Dorsolateral prefrontal cortex (tissue), 120 donors: ENCODE measurements at regions of chr13 and their contacts with region 1.

Region 1: GRCh38 chr13:50081679-50082425 is 66.6 kb downstream of the KCNRG start:
- DNase-seq: peak; percentile 96 to 99 (median 98)
- H3K4me3 ChIP-seq: peak overlapping the region; percentile 61 to 91 (median 79)
- H3K27ac ChIP-seq: peak overlapping the region; percentile 63 to 94 (median 86)
- H3K27me3 ChIP-seq: no peaks in the 10 kb centered on the region
- CTCF ChIP-seq: peak in 35 of 56 donors; percentile 9 to 50 (median 28)

Region 2: GRCh38 chr13:49540552-49540951 is 541.3 kb before region 1 on chr13:
- intact Hi-C with region 1: no loop called
- DNase-seq: no peak
- H3K4me3 ChIP-seq: peak overlapping the region in 1 of 59 donors; percentile 19
- H3K27ac ChIP-seq: peak overlapping the region in 28 of 59 donors; percentile 0 to 63 (median 24)
- H3K27me3 ChIP-seq: no peaks in the 10 kb centered on the region
- CTCF ChIP-seq: no peak

Region 3: DNA sequence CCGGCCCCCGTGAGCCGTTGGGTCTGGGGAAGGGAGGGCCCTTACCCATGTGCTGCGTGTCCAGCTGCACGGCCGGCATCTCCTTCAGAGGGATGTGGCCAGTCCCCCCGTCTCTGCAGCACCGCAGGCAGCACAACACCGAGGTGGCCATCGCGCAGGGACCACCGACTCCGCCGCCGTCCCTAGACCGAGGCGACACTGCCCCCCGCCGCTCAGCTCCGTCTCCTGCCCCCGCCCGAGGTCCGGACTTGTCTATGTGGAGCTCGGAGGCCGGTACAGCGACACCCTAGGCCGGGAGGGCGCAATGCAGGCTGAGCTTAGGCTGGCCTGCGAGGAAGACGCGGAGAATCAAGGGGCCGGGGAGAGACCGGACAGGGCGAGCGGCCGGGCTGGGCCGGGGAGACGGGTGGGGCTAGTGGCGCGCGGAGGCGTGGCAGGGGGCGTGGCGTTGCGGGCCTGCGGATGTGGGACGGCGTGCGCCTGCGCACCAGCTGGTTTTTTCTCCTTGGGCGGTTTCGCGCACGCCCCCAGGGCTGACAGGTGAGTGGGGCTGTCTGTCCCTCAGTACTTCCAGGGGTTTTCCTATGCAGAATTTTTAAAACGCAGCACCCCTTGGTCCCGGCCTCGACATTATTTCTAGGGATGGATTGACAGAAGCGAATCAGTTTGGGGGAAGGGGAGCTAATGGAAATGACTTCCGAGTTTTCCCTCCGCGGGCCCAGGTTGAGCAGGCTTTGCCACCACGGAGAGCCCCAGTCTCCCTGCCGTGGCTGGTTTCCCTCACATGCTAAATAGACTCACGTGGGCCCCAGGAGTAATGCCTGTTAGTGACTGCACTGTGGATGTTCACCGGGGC is 145.5 kb before region 1 on chr13 and contains the start of gene SPRYD7:
- intact Hi-C with region 1: loop called in 1 of 2 experiments (anchors 5 kb)
- DNase-seq: peak; percentile 96 to 99 (median 98)
- H3K4me3 ChIP-seq: peak within 1 kb of the TSS; percentile 56 to 97 (median 86)
- H3K27ac ChIP-seq: peak within 1 kb of the TSS in 58 of 59 donors; percentile 50 to 94 (median 88)
- H3K27me3 ChIP-seq: no peaks in the 10 kb centered on the region
- CTCF ChIP-seq: peak; percentile 68 to 99 (median 92)
- total RNA-seq, gene SPRYD7: 11.6 to 33.4 (median 22.1) TPM

Region 4: DNA sequence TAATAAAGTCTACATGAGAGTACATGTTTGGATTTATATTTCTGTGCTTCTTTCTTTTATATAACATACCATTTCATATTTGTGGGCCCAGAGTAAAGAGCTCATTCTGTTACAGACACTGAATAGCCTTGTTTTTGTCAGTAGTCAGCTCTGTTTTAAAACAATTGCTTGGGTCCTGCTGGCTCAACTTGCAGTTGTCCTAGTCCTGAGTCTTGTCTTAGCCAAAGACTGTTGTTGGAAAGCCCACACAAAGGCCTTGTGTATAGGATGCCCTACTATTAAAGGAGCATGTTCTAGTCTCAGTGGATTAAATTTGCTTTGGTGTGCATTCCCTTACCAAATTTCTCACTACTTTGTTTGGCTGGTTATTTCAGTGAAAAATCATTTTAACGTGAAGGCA is 70.4 kb before region 1 on chr13:
- intact Hi-C with region 1: loop called in 1 of 2 experiments (anchors 5 kb)
- DNase-seq: peak in 2 of 10 donors; percentile 48
- H3K4me3 ChIP-seq: peak overlapping the region in 7 of 59 donors; percentile 1 to 41 (median 22)
- H3K27ac ChIP-seq: peak overlapping the region; percentile 46 to 97 (median 86)
- H3K27me3 ChIP-seq: no peaks in the 10 kb centered on the region
- CTCF ChIP-seq: peak in 6 of 56 donors; percentile 6 to 25 (median 13)

Region 5: DNA sequence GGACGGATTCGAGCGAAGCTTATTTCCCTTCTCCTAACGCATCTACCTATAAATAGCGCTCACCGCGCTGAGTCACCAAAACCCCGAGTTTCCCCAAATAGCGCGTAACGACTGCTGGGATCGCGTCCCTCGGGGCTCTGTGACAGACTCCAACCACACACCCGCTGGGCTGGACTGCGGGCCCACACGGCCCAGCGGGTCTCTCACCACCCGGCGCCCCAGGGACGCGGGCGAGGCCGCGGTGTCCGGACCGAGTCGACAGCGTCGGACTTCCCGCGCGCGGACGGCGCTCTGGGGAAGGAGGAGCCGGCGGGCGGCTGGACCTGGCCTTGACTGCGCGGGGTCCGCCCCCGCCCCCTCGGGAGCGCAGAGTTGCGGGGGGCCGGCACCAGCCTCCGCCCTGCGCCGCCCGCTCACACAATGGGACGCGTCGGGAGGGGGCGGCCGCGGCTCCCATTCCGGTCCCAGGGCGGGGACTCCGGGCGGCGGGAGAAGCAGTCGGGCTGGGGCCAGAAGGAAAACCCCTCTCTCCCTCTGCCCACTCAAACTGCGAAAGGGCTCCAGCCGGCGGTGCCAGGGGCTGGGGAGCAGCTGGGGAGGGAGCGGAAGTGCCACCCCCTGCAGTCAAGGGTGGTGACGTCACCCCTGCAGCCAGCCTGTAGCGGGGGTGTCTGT is 42.1 kb after region 1 on chr13:
- intact Hi-C with region 1: loop called (anchors 1 to 2 kb)
- DNase-seq: peak in 9 of 10 donors; percentile 56 to 94 (median 72)
- H3K4me3 ChIP-seq: peak overlapping the region; percentile 66 to 99 (median 96)
- H3K27ac ChIP-seq: peak overlapping the region; percentile 95 to 100 (median 100)
- H3K27me3 ChIP-seq: peaks cover 0 to 11% (median 0%) of the 10 kb centered on the region in 45 donors
- CTCF ChIP-seq: peak in 25 of 56 donors; percentile 0 to 49 (median 20)

Region 6: DNA sequence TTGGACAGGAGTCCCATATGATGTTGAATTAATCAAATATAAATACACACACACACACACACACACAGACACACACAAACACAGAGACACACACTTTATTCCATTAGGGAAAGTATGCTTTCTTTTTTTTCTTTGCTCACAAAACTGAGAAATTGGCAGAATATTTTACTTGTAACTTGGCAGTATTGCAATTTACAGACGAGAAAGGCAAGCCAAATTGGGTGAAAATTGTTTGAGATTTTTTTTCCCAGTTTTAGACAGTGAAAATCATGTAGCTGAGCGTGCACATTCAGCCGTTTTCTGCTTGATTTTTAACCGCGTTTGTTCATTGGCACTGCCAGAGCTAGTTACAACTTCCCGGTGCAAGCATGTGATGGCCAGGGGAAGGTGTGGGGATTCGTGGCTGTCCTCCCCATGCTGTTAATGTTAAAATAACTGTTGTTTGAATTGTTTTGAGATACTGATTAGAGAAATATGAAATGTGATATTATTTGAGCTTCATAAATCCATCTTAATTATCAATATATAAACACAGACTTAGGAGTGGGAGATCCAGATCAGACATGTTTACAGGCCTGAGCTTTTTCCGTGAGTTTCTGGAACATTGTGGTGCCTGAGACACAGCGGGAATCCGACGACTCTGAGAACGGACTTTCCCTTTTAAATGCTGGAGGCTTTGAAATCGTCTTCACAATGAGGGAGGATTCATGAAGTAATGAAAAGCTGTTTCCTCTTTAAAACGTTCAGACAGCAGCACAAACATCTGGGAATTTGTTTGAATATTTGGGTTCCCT is 58.9 kb after region 1 on chr13:
- intact Hi-C with region 1: no loop called
- DNase-seq: no peak
- H3K4me3 ChIP-seq: peak overlapping the region in 33 of 59 donors; percentile 1 to 42 (median 21)
- H3K27ac ChIP-seq: peak overlapping the region in 41 of 59 donors; percentile 3 to 73 (median 36)
- H3K27me3 ChIP-seq: peaks cover 0 to 10% (median 0%) of the 10 kb centered on the region in 45 donors
- CTCF ChIP-seq: no peak

Region 7: DNA sequence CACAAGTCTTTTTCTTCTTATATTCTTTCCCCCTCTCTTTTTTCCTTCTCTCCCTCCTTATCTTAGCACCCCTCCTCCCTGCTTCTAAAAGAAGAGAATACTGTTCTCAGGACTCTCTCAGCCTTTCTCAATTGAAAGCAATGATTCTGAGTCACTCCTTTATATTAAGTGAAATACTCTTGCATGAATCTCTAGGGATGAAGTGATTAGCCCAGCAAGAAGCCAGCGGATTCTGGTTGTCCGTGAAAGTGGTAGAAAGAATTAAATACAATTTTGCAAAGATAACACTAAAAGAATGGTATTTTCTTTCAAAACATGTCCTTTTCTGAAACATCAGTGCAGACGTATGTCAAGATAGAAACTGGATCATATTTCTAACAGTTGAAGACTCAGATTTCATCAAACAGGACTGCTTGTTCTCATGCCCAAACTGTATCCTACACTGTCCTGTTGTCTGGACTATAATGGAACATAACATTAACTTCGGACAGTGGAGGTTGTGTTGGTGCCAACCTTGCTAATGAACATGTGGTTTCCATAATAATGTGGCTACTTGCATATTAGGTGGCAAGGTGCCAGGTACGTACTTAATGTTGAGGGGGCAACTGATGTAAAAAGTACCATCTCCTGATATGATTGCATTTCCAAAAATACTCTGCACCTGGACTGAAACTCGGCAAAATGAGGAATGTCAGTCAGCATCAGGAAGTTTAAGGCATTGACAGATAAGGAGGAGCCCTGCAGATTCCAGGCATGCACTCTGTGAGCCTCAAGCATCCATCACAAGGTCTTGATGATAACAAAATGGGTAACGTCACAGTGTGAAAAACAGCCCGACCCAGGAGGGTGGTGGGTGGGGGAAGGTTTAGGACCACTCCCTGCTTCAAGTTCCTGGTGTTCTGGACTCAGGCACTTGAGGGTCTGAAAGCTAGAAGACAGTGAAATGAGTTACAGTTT is 404.4 kb after region 1 on chr13:
- intact Hi-C with region 1: no loop called
- DNase-seq: no peak
- H3K4me3 ChIP-seq: peak overlapping the region in 6 of 59 donors; percentile 4 to 25 (median 6)
- H3K27ac ChIP-seq: peak overlapping the region in 23 of 59 donors; percentile 2 to 75 (median 24)
- H3K27me3 ChIP-seq: no peaks in the 10 kb centered on the region
- CTCF ChIP-seq: no peak

Region 8: DNA sequence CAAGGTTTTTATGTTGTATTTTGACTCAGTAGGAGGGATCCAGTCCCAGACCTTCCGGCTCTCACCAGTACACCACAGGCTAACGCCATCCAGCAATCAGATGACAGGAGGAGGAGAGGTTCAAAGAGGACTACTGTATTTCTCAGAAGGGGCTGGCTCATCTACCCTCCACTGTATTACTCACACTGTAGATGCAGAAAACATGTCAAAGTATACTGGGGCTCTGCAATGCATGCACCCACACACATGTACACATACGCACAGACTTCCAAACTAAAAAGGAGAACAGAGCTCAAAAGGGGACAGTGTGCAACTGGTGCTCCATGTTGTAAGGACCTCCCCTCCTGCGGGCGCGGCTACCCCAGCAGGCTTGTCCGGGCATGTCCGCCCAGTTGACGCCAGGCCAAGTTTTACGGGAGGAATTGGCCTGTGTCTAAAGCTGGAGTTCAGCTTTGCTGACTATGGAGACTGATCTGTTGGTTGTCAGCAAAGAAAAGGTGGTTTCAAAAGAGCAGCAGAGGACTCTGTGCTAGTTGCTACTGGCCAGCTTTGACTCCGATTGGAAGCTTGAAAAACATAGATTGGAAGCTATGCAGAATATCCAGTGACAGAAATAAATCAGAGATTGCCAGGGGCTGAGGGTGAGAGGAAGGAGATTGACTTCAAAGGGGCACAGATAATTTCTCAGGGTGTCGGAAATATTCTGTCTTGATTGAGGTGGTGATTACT is 447.5 kb after region 1 on chr13:
- intact Hi-C with region 1: loop called (anchors 5 to 10 kb)
- DNase-seq: peak; percentile 41 to 73 (median 70)
- H3K4me3 ChIP-seq: peak overlapping the region in 51 of 59 donors; percentile 6 to 58 (median 33)
- H3K27ac ChIP-seq: peak overlapping the region; percentile 0 to 93 (median 76)
- H3K27me3 ChIP-seq: no peaks in the 10 kb centered on the region
- CTCF ChIP-seq: peak in 6 of 56 donors; percentile 9 to 34 (median 17)

Region 9: GRCh38 chr13:50911937-50912795 is 830.3 kb after region 1 on chr13:
- intact Hi-C with region 1: loop called (anchors 5 kb)
- DNase-seq: peak; percentile 80 to 93 (median 86)
- H3K4me3 ChIP-seq: peak overlapping the region in 20 of 59 donors; percentile 1 to 92 (median 82)
- H3K27ac ChIP-seq: peak overlapping the region in 1 of 59 donors; percentile 15
- H3K27me3 ChIP-seq: no peaks in the 10 kb centered on the region
- CTCF ChIP-seq: peak; percentile 63 to 95 (median 89)